Lower leg skin (tissue), 4 donors: ENCODE measurements at regions of chr4 and their contacts with region 1.

Region 1: GRCh38 chr4:52545099-52546069 is 113.7 kb downstream of the USP46 start:
- DNase-seq: peak; percentile 69 to 93
- H3K4me3 ChIP-seq: no peak overlapping the region
- CTCF ChIP-seq: peak in 1 of 3 donors; percentile 69
- POLR2A ChIP-seq: no peak

Region 2: GRCh38 chr4:52576857-52577623 is 31.7 kb after region 1 on chr4:
- intact Hi-C with region 1: no loop called
- DNase-seq: no peak
- H3K4me3 ChIP-seq: no peak overlapping the region
- CTCF ChIP-seq: no peak
- POLR2A ChIP-seq: no peak

Region 3: GRCh38 chr4:52799813-52800212 is 254.4 kb after region 1 on chr4:
- intact Hi-C with region 1: no loop called
- DNase-seq: no peak
- H3K4me3 ChIP-seq: no peak overlapping the region
- CTCF ChIP-seq: no peak
- POLR2A ChIP-seq: no peak

Region 4: DNA sequence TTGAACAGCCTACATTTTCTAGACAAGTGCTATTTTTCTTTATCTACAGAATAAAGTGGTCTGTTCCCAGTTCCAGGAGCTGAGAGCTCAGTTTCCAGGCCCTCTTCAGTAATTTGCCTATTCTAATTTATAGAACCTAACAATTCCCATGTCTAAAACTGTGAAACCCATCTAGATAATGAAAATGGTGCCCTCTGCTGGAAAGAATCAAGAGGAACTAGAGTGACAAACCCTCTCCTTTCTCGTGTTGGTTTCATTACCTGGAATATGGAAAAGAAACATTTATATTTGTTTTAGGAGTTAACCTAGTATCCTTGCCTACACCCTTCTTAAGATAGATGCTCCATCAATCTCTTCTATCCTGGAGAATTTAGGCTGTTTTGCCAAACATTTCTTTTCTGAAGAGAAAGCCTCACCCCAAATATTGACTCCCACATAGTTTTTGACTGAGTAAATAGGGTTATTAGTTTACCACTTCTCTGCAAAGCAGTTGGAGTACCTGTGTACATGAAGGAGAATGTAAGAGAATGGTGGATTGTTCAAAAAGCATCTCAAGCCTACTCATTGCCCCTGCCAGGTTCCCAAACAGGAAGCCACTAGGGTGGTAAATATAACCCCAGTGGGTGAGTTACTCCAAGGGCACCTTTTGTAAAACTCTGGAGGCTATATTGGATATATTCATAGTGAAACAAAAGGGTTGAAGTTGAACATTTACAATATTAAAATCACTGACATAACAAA is 438.3 kb after region 1 on chr4:
- intact Hi-C with region 1: loop called (anchors 5 kb)
- DNase-seq: no peak
- H3K4me3 ChIP-seq: no peak overlapping the region
- CTCF ChIP-seq: no peak
- POLR2A ChIP-seq: no peak